ENCODE measurements at regions of chr6 and their contacts with region 1.

Region 1: DNA sequence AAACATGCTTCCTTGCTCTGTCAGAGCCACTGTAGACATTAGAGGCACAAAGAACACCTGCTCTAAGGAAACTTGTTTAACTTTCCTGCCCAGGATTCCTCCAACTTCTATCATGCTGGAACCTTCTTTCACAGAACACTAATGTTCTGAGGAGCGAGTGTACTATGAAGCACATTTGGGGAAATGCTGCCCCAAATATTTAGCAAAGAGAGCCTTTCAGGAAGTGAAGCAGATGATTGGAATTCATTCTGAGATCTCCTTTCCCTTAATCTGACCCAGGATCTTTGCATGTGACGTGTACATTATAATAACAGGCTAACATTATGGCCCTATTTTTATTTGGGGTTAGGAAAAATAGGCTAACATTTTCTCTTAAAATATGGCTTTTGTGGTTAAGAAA is 21.0 kb upstream of the FYN start:
- DNase-seq: no peak
- ATAC-seq: no peak
- H3K4me3 ChIP-seq: no peak overlapping the region
- H3K4me3 Mint-ChIP-seq: no peak overlapping the region
- H3K27ac ChIP-seq: no peak overlapping the region
- H3K27ac Mint-ChIP-seq: no peak overlapping the region
- H3K4me1 ChIP-seq: no peaks in the 10 kb centered on the region
- H3K4me1 Mint-ChIP-seq: peaks cover 0 to 3% (median 0%) of the 10 kb centered on the region in 7 donors
- H3K27me3 ChIP-seq: no peaks in the 10 kb centered on the region
- H3K27me3 Mint-ChIP-seq: peaks cover 0 to 11% (median 0%) of the 10 kb centered on the region in 5 donors

Region 2: DNA sequence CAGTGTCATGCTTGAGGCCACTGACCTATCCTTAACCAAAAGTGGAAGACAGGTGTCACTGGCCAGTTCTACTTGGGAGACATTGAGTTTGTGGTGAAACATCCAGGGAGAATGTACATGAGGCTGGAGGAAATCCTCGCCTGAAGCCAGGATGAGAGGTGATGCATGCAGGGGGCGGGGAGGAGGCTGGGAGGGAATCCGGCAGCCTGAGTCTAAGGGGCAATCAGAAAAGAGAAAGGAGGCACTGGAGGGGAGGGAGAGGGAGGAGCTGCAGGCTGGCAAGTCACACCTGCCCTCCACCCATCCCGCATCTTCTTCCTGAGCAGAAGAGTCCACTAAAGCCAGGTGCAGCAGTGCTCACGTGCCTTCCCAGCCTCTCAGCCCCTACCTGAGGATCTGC is 1464.0 kb before region 1 on chr6:
- CTCF ChIA-PET with region 1: no interaction called
- POLR2A ChIA-PET with region 1: no interaction called
- intact Hi-C with region 1: no loop called
- DNase-seq: no peak
- ATAC-seq: no peak
- H3K4me3 ChIP-seq: no peak overlapping the region
- H3K4me3 Mint-ChIP-seq: no peak overlapping the region
- H3K27ac ChIP-seq: no peak overlapping the region
- H3K27ac Mint-ChIP-seq: no peak overlapping the region
- H3K4me1 ChIP-seq: no peaks in the 10 kb centered on the region
- H3K4me1 Mint-ChIP-seq: peaks cover 0 to 4% (median 0%) of the 10 kb centered on the region in 7 donors
- H3K27me3 ChIP-seq: no peaks in the 10 kb centered on the region
- H3K27me3 Mint-ChIP-seq: peaks cover 4 to 32% (median 28%) of the 10 kb centered on the region in 5 donors

Region 3: GRCh38 chr6:111861431-111861885 is 32.8 kb before region 1 on chr6:
- CTCF ChIA-PET with region 1: no interaction called
- POLR2A ChIA-PET with region 1: no interaction called
- intact Hi-C with region 1: no loop called
- DNase-seq: no peak
- ATAC-seq: peak; percentile 14
- H3K4me3 ChIP-seq: peak overlapping the region; percentile 6
- H3K4me3 Mint-ChIP-seq: peak overlapping the region in 9 of 10 donors; percentile 16 to 93 (median 40)
- H3K27ac ChIP-seq: peak overlapping the region; percentile 9
- H3K27ac Mint-ChIP-seq: peak overlapping the region in 7 of 9 donors; percentile 9 to 75 (median 38)
- H3K4me1 ChIP-seq: peaks cover 86 to 97% of the 10 kb centered on the region in 2 donors
- H3K4me1 Mint-ChIP-seq: peaks cover 0 to 100% (median 96%) of the 10 kb centered on the region in 7 donors
- H3K27me3 ChIP-seq: no peaks in the 10 kb centered on the region
- H3K27me3 Mint-ChIP-seq: no peaks in the 10 kb centered on the region

Region 4: GRCh38 chr6:111925296-111925695 is 31.0 kb after region 1 on chr6:
- CTCF ChIA-PET with region 1: interaction called, 5 read pairs
- POLR2A ChIA-PET with region 1: interaction called, 4 read pairs
- intact Hi-C with region 1: loop called in 1 of 2 experiments (anchors 5 kb)
- DNase-seq: no peak
- ATAC-seq: peak; percentile 58
- H3K4me3 ChIP-seq: no peak overlapping the region
- H3K4me3 Mint-ChIP-seq: no peak overlapping the region
- H3K27ac ChIP-seq: no peak overlapping the region
- H3K27ac Mint-ChIP-seq: peak overlapping the region in 2 of 9 donors; percentile 21 to 38
- H3K4me1 ChIP-seq: no peaks in the 10 kb centered on the region
- H3K4me1 Mint-ChIP-seq: peaks cover 0 to 24% (median 14%) of the 10 kb centered on the region in 7 donors
- H3K27me3 ChIP-seq: no peaks in the 10 kb centered on the region
- H3K27me3 Mint-ChIP-seq: peaks cover 0 to 4% (median 0%) of the 10 kb centered on the region in 5 donors

Region 5: DNA sequence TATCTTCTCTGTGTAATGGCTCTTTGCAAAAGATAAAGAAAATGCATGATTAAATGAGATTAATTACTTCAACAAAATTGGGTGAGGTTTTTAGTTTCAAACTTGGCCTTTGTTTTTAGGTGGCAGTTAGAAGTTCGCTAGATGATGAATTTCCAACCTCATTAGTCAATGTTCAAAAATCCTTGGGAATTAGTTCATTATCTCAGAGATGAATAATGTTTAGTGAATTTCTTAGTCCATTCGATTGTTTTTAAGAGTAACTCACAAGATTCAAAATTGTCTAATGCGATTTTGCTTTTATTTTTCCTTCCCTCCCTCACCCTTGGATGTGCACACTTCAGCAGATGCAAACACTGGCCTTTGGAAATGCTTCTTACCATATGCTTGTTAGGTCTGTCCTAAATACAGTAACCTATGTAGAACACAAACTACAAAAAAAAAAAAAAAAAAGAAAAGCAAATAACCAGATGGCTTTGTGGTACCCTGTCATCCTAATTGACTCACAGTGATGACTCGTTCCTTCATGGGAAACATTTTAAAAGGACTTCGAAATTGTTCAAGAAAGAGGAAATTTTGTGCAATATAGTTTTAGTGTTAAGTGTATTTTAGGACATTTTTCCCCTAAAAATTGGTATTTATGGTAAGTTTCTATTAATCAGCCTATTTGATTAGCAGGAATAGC is 259.8 kb after region 1 on chr6:
- CTCF ChIA-PET with region 1: no interaction called
- POLR2A ChIA-PET with region 1: no interaction called
- intact Hi-C with region 1: no loop called
- DNase-seq: no peak
- ATAC-seq: no peak
- H3K4me3 ChIP-seq: no peak overlapping the region
- H3K4me3 Mint-ChIP-seq: no peak overlapping the region
- H3K27ac ChIP-seq: no peak overlapping the region
- H3K27ac Mint-ChIP-seq: no peak overlapping the region
- H3K4me1 ChIP-seq: no peaks in the 10 kb centered on the region
- H3K4me1 Mint-ChIP-seq: peaks cover 0 to 10% (median 0%) of the 10 kb centered on the region in 7 donors
- H3K27me3 ChIP-seq: no peaks in the 10 kb centered on the region
- H3K27me3 Mint-ChIP-seq: peaks cover 0 to 30% (median 3%) of the 10 kb centered on the region in 5 donors

Region 6: DNA sequence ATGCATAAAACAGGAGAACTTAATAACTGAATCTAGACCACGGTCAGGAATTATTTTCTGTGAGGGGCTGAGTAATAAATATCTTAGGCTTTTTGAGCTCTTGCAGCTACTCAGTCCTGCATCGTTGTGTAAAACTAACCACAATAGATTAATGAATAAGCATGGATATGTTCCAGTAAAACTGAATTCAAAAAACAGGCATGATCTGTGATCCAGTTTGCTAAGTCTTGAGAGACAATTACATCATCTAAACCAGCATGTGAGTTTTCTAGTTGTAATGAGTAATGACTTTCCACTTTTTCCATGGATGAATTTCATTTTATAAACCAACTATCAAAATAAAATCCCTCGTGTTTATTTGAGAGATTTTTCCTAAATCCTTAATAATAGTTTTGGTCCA is 789.7 kb after region 1 on chr6:
- CTCF ChIA-PET with region 1: no interaction called
- POLR2A ChIA-PET with region 1: no interaction called
- intact Hi-C with region 1: no loop called
- DNase-seq: no peak
- ATAC-seq: no peak
- H3K4me3 ChIP-seq: no peak overlapping the region
- H3K4me3 Mint-ChIP-seq: no peak overlapping the region
- H3K27ac ChIP-seq: no peak overlapping the region
- H3K27ac Mint-ChIP-seq: no peak overlapping the region
- H3K4me1 ChIP-seq: no peaks in the 10 kb centered on the region
- H3K4me1 Mint-ChIP-seq: peaks cover 0 to 6% (median 0%) of the 10 kb centered on the region in 7 donors
- H3K27me3 ChIP-seq: no peaks in the 10 kb centered on the region
- H3K27me3 Mint-ChIP-seq: no peaks in the 10 kb centered on the region

Measured in naive thymus-derived CD4-positive, alpha-beta T cell (primary cell).